H1 (cell line): ENCODE measurements at regions of chr5 and their contacts with region 1.

Region 1: GRCh38 chr5:111461255-111461671 is 51.1 kb downstream of the STARD4 start:
- DNase-seq: peak; percentile 36 to 55
- H3K4me3 ChIP-seq: no peak overlapping the region
- H3K27ac ChIP-seq: no peak overlapping the region
- H3K4me1 ChIP-seq: peaks cover 0 to 3% (median 3%) of the 10 kb centered on the region in 4 experiments; a peak in 3 of 7 replicates
- H3K27me3 ChIP-seq: no peaks in the 10 kb centered on the region
- CTCF ChIP-seq: peak; percentile 79 to 90 (median 85)
- EP300 ChIP-seq: no peak
- POLR2A ChIP-seq: no peak
- RAD21 ChIP-seq: peak; percentile 82 to 84

Region 2: DNA sequence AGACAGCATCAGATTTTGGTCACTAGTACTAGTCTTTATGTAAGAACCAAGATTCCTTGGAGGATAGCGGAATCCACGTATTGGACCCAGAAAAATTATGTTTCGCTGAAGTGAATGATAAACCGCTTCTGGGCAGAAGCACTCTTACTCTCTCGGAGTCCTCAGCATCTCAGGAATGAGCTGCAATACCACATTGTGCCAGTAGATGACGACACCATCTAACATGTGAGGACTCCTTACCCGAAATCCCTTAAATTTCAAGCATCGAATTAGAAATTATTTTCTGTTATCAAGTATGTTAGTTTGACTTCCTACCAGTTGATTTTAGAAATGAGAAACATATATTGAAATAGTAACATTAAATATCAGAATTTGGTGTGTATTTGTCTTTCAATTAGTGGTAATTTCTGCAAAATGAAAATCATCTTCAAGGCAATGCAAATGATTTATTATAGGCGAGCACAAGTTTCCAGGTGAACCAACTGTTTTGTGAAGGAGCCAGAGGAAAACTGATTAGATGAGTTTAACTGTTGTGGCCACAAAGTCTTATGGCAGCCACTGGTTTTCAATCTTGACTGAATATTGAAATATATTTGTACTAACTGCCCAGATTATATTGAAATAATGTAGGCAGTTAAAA is 303.0 kb before region 1 on chr5:
- CTCF ChIA-PET with region 1: interaction called, 28 read pairs
- POLR2A ChIA-PET with region 1: no interaction called
- DNase-seq: peak; percentile 43 to 90
- H3K4me3 ChIP-seq: no peak overlapping the region
- H3K27ac ChIP-seq: no peak overlapping the region
- H3K4me1 ChIP-seq: no peaks in the 10 kb centered on the region
- H3K27me3 ChIP-seq: no peaks in the 10 kb centered on the region
- CTCF ChIP-seq: peak; percentile 53 to 98 (median 90)
- EP300 ChIP-seq: no peak
- POLR2A ChIP-seq: no peak
- RAD21 ChIP-seq: peak; percentile 96 to 99

Region 3: DNA sequence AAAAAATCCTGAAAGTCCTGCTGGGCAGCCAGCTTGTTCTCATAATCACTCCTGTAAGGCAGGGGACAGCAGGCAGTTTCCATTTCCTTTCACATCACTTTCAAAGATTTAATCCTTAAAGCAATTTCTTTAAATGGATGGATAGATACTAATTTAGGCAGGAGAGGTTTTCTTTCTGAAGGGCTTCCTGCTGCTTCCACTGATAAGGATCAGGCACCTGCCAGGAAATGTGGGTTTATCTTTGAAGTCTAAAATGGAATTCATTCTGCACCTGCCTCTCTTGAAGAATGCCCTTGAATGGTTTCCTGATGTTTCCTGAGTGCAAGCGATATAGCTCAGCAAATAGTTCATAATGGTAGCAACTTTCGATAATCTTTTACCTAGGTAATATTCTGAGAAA is 13.4 kb before region 1 on chr5:
- CTCF ChIA-PET with region 1: interaction called, 14 read pairs
- POLR2A ChIA-PET with region 1: no interaction called
- DNase-seq: no peak
- H3K4me3 ChIP-seq: no peak overlapping the region
- H3K27ac ChIP-seq: no peak overlapping the region
- H3K4me1 ChIP-seq: no peaks in the 10 kb centered on the region; a peak in 1 of 7 replicates
- H3K27me3 ChIP-seq: no peaks in the 10 kb centered on the region
- CTCF ChIP-seq: no peak
- EP300 ChIP-seq: no peak
- POLR2A ChIP-seq: no peak
- RAD21 ChIP-seq: no peak

Region 4: GRCh38 chr5:111472579-111472978 is 11.3 kb after region 1 on chr5:
- CTCF ChIA-PET with region 1: interaction called, 22 read pairs
- POLR2A ChIA-PET with region 1: no interaction called
- DNase-seq: no peak
- H3K4me3 ChIP-seq: no peak overlapping the region
- H3K27ac ChIP-seq: no peak overlapping the region
- H3K4me1 ChIP-seq: no peaks in the 10 kb centered on the region
- H3K27me3 ChIP-seq: no peaks in the 10 kb centered on the region
- CTCF ChIP-seq: no peak
- EP300 ChIP-seq: no peak
- POLR2A ChIP-seq: no peak
- RAD21 ChIP-seq: no peak